ENCODE measurements at regions of chr19 and their contacts with region 1.

Region 1: DNA sequence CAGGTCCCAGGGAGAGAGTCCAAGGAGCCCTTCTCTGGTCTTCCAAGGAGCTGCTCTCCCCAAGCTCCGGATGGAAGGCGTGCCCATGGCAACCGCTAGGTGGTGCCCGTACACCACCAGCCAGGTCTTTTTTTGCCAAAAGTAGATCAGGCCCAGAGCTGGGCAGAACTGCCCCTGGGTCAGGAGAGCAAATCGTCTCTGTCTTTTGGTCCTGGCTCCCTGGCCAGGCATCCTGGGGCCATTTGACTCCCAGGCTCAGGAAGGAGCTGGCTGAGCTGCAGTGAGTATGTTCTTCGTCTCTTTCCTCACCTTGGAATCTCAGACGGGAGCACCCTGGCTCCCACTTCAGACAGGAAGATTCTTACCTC is 24.6 kb upstream of the BCL3 start:
- DNase-seq: peak; percentile 83
- ATAC-seq: peak; percentile 94
- H3K4me3 Mint-ChIP-seq: no peak overlapping the region
- H3K27ac Mint-ChIP-seq: no peak overlapping the region
- H3K4me1 Mint-ChIP-seq: peaks cover 50% of the 10 kb centered on the region
- H3K27me3 Mint-ChIP-seq: peaks cover 3% of the 10 kb centered on the region

Region 2: DNA sequence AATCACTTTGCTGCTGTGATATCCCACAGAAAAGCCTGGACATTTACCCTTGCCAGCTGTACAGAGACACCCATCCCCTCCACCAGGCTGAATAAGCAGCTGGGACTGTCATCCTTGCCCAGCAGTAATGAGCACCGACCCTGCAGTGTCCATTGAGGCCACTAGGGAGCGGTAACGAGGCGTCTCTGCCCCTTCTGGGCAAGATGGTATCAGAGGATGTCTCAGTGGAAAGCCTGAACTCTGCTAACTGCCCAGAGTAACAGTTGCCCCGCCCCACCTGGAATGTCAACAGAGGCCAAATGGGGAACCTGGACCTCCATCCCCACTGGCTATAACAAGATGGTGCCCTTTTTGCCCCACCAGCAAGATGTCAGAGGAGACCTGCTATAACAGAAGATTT is 171.6 kb before region 1 on chr19:
- CTCF ChIA-PET with region 1: no interaction called
- POLR2A ChIA-PET with region 1: no interaction called
- DNase-seq: peak; percentile 56
- ATAC-seq: peak; percentile 67
- H3K4me3 Mint-ChIP-seq: no peak overlapping the region
- H3K27ac Mint-ChIP-seq: no peak overlapping the region
- H3K4me1 Mint-ChIP-seq: no peaks in the 10 kb centered on the region
- H3K27me3 Mint-ChIP-seq: peaks cover 3% of the 10 kb centered on the region

Region 3: DNA sequence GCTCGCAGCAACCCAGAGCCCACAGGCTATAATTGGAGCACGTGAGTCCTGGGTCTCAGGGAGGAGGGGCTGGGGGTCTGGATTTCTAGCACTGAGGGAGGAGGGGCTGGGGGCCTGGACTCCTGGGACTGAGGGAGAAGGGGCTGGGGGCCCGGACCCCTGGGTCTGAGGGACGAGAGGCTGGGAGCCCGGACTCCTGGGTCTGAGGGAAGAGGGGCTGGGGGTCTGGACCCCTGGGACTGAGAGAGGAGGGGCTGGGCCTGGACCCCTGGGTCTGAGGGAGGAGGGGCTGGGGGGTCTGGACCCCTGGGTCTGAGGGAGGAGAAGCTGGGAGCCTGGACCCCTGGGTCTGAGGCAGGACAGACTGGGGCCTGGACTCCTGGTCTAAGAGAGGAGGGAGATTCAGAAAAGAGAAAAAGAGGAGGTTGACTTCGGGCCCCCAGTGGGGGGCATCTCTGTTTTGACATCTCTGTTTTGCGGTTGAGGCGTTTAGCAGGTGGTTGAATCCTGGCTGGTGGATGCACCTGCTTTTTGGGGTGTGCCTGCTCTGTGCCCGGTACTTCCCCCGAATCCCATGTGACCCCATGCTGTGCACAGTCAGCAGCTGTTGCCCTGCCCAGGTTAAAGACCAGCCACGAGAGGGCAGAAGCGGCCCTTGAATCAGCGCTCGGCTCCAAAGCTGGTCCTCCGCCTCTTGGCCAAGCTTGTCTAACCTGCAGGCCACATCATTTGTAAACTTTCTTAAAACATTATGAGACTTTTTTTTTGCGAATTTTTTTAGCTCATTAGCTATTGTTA is 69.8 kb before region 1 on chr19:
- CTCF ChIA-PET with region 1: interaction called, 53 read pairs
- POLR2A ChIA-PET with region 1: no interaction called
- DNase-seq: peak; percentile 82
- ATAC-seq: peak; percentile 90
- H3K4me3 Mint-ChIP-seq: no peak overlapping the region
- H3K27ac Mint-ChIP-seq: no peak overlapping the region
- H3K4me1 Mint-ChIP-seq: peaks cover 6% of the 10 kb centered on the region
- H3K27me3 Mint-ChIP-seq: no peaks in the 10 kb centered on the region

Region 4: GRCh38 chr19:44705502-44706010 is 18.4 kb before region 1 on chr19:
- CTCF ChIA-PET with region 1: interaction called, 12 read pairs
- POLR2A ChIA-PET with region 1: no interaction called
- DNase-seq: no peak
- ATAC-seq: no peak
- H3K4me3 Mint-ChIP-seq: no peak overlapping the region
- H3K27ac Mint-ChIP-seq: no peak overlapping the region
- H3K4me1 Mint-ChIP-seq: peaks cover 9% of the 10 kb centered on the region
- H3K27me3 Mint-ChIP-seq: peaks cover 7% of the 10 kb centered on the region

Region 5: DNA sequence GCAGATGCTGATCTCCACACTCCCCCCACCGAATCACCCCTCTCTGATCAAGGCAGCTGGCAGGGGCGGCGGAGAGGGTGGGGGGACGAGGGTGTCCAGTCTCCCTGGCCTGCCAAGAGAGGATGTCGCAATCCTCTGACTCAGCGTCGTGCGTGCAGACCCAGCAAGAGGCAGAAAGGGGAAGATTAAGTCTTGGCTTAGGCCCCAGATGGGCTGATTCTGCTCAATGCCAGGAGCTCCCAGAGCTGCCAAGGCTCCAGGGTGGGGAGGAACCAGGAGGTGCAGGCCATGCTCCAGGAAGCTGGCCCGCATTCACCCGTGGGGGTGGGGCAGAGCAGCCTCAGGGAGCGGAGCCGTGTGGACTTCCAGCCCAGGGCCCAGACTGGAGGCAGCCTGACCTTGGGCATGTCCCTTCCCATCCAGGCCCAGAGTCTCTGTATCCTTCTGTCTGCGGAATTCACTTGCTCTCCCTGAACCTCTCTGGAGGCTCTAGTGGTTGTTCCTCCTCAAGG is 18.0 kb after region 1 on chr19:
- CTCF ChIA-PET with region 1: interaction called, 24 read pairs
- POLR2A ChIA-PET with region 1: no interaction called
- DNase-seq: no peak
- ATAC-seq: no peak
- H3K4me3 Mint-ChIP-seq: no peak overlapping the region
- H3K27ac Mint-ChIP-seq: no peak overlapping the region
- H3K4me1 Mint-ChIP-seq: peaks cover 38% of the 10 kb centered on the region
- H3K27me3 Mint-ChIP-seq: peaks cover 5% of the 10 kb centered on the region

Region 6: DNA sequence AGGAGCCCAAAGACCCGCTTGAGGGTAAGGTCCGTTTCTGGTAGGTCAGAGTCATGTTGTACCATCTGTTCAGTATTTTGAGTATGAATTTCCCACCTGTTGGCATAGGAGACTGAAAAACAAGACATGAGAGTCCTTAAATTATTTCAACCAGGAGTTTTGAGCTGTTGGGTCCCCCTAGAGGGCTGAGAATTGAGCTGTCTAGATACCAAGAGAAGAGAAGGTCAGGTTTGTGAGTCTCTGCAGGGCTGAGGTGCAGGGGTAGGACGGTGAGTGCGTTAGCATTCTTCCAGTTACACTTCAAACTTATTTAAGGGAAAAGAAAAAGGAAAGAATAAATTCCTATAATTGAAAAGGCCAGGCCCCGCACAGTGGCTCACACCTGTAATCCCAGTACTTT is 58.8 kb after region 1 on chr19:
- CTCF ChIA-PET with region 1: interaction called, 455 read pairs
- POLR2A ChIA-PET with region 1: no interaction called
- DNase-seq: no peak
- ATAC-seq: no peak
- H3K4me3 Mint-ChIP-seq: no peak overlapping the region
- H3K27ac Mint-ChIP-seq: no peak overlapping the region
- H3K4me1 Mint-ChIP-seq: peaks cover 7% of the 10 kb centered on the region
- H3K27me3 Mint-ChIP-seq: no peaks in the 10 kb centered on the region

Region 7: GRCh38 chr19:44845612-44846454 is 121.9 kb after region 1 on chr19 and contains the start of gene NECTIN2:
- CTCF ChIA-PET with region 1: interaction called, 15 read pairs
- POLR2A ChIA-PET with region 1: no interaction called
- DNase-seq: peak; percentile 91
- ATAC-seq: peak; percentile 80
- H3K4me3 Mint-ChIP-seq: peak within 1 kb of the TSS; percentile 79
- H3K27ac Mint-ChIP-seq: peak within 1 kb of the TSS; percentile 48
- H3K4me1 Mint-ChIP-seq: peaks cover 37% of the 10 kb centered on the region
- H3K27me3 Mint-ChIP-seq: peaks cover 43% of the 10 kb centered on the region
- total RNA-seq, gene NECTIN2: 0.26 to 0.31 TPM

Measured in activated CD8-positive, alpha-beta T cell treated with anti-CD3 and anti-CD28 coated beads, Interleukin-2, amount 10 ng/mL, durations not matched to agents 7 days and 5 days (primary cell).